Caco-2 (cell line): ENCODE measurements at regions of chr7 and their contacts with region 1.

Region 1: GRCh38 chr7:92652536-92652935 is 62.3 kb upstream of the FAM133B start:
- DNase-seq: peak; percentile 52 to 55
- H3K4me3 ChIP-seq: no peak overlapping the region
- H3K4me3 Mint-ChIP-seq: no peak overlapping the region
- H3K27ac Mint-ChIP-seq: peak overlapping the region; percentile 56
- H3K4me1 ChIP-seq: peaks cover 33% of the 10 kb centered on the region
- H3K4me1 Mint-ChIP-seq: peaks cover 59% of the 10 kb centered on the region
- H3K27me3 ChIP-seq: no peaks in the 10 kb centered on the region
- H3K27me3 Mint-ChIP-seq: no peaks in the 10 kb centered on the region
- CTCF ChIP-seq: no peak

Region 2: DNA sequence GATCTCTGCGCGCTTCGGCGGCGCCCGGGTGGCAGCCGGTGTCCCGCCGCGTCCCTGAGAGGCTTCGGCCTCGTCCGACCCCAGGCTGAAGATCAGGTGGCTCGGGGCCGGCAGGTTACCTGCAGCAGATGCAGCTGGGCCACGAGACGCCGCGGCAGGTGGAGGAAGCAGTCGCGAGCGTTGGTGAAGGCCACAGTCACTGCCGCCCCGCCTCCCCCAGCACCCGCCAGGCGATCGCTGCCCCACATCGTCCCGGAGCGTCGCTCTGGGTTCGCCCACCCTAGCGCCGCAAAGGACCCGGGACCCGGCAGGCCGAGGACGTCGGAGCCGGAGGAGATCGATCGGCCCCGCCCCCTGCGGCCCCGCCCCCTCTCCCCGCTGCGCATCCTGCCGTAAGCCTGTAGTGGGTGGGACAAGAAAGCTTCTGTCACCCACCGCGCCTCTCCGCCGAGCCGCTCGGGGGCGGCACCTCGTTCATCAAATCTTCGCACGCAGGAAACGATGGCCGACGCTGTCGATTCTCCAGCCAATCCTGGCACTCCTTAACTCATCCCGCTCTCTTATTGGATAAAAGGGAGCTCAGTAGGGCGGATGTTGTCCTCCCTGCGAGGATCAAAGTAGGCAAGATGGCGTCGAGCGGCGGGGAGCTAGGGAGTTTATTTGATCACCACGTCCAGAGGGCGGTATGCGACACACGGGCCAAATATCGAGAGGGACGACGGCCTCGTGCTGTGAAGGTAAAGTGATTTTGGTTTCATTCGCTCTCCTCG is 124.2 kb before region 1 on chr7 and contains the starts of genes PEX1 and RBM48:
- CTCF ChIA-PET with region 1: no interaction called
- POLR2A ChIA-PET with region 1: no interaction called
- intact Hi-C with region 1: no loop called
- DNase-seq: peak; percentile 97 to 99
- H3K4me3 ChIP-seq: peak within 1 kb of the TSS; percentile 97
- H3K4me3 Mint-ChIP-seq: peak within 1 kb of the TSS; percentile 97
- H3K27ac Mint-ChIP-seq: peak within 1 kb of the TSS; percentile 98
- H3K4me1 ChIP-seq: peaks cover 12% of the 10 kb centered on the region
- H3K4me1 Mint-ChIP-seq: peaks cover 6% of the 10 kb centered on the region
- H3K27me3 ChIP-seq: no peaks in the 10 kb centered on the region
- H3K27me3 Mint-ChIP-seq: no peaks in the 10 kb centered on the region
- CTCF ChIP-seq: peak in 1 of 2 experiments; percentile 58
- total RNA-seq, gene PEX1: 19.5 and 20.1 TPM in 2 replicates
- total RNA-seq, gene RBM48: 14.2 and 14.4 TPM in 2 replicates

Region 3: GRCh38 chr7:92682903-92683539 is 30.5 kb after region 1 on chr7:
- CTCF ChIA-PET with region 1: no interaction called
- POLR2A ChIA-PET with region 1: no interaction called
- intact Hi-C with region 1: loop called (anchors 1 kb)
- DNase-seq: peak in 1 of 2 experiments; percentile 50
- H3K4me3 ChIP-seq: no peak overlapping the region
- H3K4me3 Mint-ChIP-seq: peak overlapping the region; percentile 37
- H3K27ac Mint-ChIP-seq: peak overlapping the region; percentile 74
- H3K4me1 ChIP-seq: peaks cover 50% of the 10 kb centered on the region
- H3K4me1 Mint-ChIP-seq: peaks cover 56% of the 10 kb centered on the region
- H3K27me3 ChIP-seq: no peaks in the 10 kb centered on the region
- H3K27me3 Mint-ChIP-seq: no peaks in the 10 kb centered on the region
- CTCF ChIP-seq: no peak